Transverse colon (tissue), 4 donors: ENCODE measurements at regions of chr2 and their contacts with region 1.

Region 1: GRCh38 chr2:196630531-196630930 is 9.0 kb upstream of the CCDC150 start:
- DNase-seq: no peak
- H3K4me3 ChIP-seq: no peak overlapping the region
- H3K27ac ChIP-seq: no peak overlapping the region
- H3K4me1 ChIP-seq: no peaks in the 10 kb centered on the region
- H3K27me3 ChIP-seq: no peaks in the 10 kb centered on the region
- CTCF ChIP-seq: no peak
- EP300 ChIP-seq: no peak
- POLR2A ChIP-seq: no peak

Region 2: DNA sequence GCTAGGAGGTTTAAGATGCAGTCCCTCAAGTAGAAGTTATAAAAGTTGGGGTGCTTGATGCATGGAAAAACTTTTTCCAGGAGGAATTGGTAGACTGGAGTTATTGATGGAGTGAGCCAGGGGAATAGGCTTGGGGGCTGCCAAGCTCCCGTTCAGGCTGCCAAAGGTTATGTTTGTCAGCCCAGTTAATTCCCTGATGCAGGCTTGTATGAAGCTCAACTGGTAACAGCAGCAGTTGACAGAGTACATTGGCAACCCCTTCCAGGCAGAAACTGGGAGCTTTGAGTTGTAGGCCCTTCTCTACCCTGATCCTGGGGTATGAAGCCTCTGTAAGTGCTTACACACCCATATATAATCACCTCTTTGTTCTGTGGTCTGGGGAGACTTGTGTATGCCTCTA is 25.2 kb after region 1 on chr2:
- in situ Hi-C with region 1: no loop called
- intact Hi-C with region 1: loop called (anchors 1 kb)
- DNase-seq: no peak
- H3K4me3 ChIP-seq: no peak overlapping the region
- H3K27ac ChIP-seq: no peak overlapping the region
- H3K4me1 ChIP-seq: no peaks in the 10 kb centered on the region
- H3K27me3 ChIP-seq: no peaks in the 10 kb centered on the region
- CTCF ChIP-seq: no peak
- EP300 ChIP-seq: no peak
- POLR2A ChIP-seq: no peak

Region 3: GRCh38 chr2:196750982-196751635 is 120.6 kb after region 1 on chr2:
- in situ Hi-C with region 1: no loop called
- intact Hi-C with region 1: no loop called
- DNase-seq: peak; percentile 72
- H3K4me3 ChIP-seq: no peak overlapping the region
- H3K27ac ChIP-seq: no peak overlapping the region
- H3K4me1 ChIP-seq: peaks cover 0 to 13% (median 0%) of the 10 kb centered on the region in 4 donors
- H3K27me3 ChIP-seq: no peaks in the 10 kb centered on the region
- CTCF ChIP-seq: peak; percentile 57 to 78 (median 70)
- EP300 ChIP-seq: no peak
- POLR2A ChIP-seq: no peak